PC-9 (cell line): ENCODE measurements at regions of chr5 and their contacts with region 1.

Region 1: GRCh38 chr5:159975462-159976019 is 33.4 kb upstream of the TTC1 start:
- DNase-seq: peak; percentile 37 to 63
- H3K4me3 ChIP-seq: no peak overlapping the region
- H3K27ac ChIP-seq: no peak overlapping the region
- H3K4me1 ChIP-seq: peaks cover 16% of the 10 kb centered on the region
- H3K27me3 ChIP-seq: no peaks in the 10 kb centered on the region
- CTCF ChIP-seq: no peak

Region 2: GRCh38 chr5:159928122-159928909 is 47.2 kb before region 1 on chr5:
- CTCF ChIA-PET with region 1: no interaction called
- POLR2A ChIA-PET with region 1: no interaction called
- intact Hi-C with region 1: loop called (anchors 2 kb)
- DNase-seq: peak; percentile 67 to 68
- H3K4me3 ChIP-seq: no peak overlapping the region
- H3K27ac ChIP-seq: no peak overlapping the region
- H3K4me1 ChIP-seq: peaks cover 16% of the 10 kb centered on the region
- H3K27me3 ChIP-seq: no peaks in the 10 kb centered on the region
- CTCF ChIP-seq: no peak

Region 3: GRCh38 chr5:159956074-159956473 is 19.5 kb before region 1 on chr5:
- CTCF ChIA-PET with region 1: no interaction called
- POLR2A ChIA-PET with region 1: interaction called, 11 read pairs
- intact Hi-C with region 1: no loop called
- DNase-seq: no peak
- H3K4me3 ChIP-seq: no peak overlapping the region
- H3K27ac ChIP-seq: no peak overlapping the region
- H3K4me1 ChIP-seq: no peaks in the 10 kb centered on the region
- H3K27me3 ChIP-seq: no peaks in the 10 kb centered on the region
- CTCF ChIP-seq: no peak